ENCODE measurements at regions of chr2 and their contacts with region 1.

Region 1: GRCh38 chr2:135709992-135710391 is 31.7 kb upstream of the UBXN4 start:
- DNase-seq: peak; percentile 84
- ATAC-seq: peak; percentile 74
- H3K4me3 Mint-ChIP-seq: no peak overlapping the region
- H3K27ac Mint-ChIP-seq: no peak overlapping the region
- H3K4me1 Mint-ChIP-seq: no peaks in the 10 kb centered on the region
- H3K27me3 Mint-ChIP-seq: no peaks in the 10 kb centered on the region

Region 2: DNA sequence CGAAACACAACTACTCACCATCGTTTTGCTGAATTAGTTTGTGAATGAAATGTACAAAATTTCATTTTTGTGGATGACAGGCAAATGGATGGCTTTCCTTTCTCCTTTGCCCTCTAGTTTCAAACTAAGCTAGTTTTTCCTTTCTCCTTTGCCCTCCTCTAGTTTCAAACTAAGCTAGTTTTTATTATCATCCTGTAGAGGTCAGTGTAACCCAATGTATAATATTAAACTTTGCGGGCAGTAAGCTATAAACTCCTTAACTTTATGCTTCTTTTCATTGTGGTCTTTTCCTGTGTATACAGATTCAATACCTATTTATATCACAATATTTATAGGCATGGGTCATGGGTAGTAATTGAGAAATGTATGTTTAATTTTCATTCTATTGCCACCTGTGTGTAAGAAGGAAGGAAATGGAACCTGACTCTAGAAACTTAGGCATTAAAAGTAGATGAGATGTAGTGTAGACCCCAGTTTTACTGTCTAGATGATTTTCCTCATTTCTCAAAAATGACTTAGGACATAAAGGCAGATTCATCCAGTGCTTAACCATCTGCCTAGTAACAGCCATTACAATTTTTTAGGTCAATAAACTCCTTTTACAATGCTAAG is 720.9 kb before region 1 on chr2:
- CTCF ChIA-PET with region 1: interaction called, 28 read pairs
- POLR2A ChIA-PET with region 1: no interaction called
- intact Hi-C with region 1: loop called in 1 of 2 experiments (anchors 1 kb)
- DNase-seq: no peak
- ATAC-seq: no peak
- H3K4me3 Mint-ChIP-seq: no peak overlapping the region
- H3K27ac Mint-ChIP-seq: no peak overlapping the region
- H3K4me1 Mint-ChIP-seq: no peaks in the 10 kb centered on the region
- H3K27me3 Mint-ChIP-seq: peaks cover 2% of the 10 kb centered on the region

Region 3: DNA sequence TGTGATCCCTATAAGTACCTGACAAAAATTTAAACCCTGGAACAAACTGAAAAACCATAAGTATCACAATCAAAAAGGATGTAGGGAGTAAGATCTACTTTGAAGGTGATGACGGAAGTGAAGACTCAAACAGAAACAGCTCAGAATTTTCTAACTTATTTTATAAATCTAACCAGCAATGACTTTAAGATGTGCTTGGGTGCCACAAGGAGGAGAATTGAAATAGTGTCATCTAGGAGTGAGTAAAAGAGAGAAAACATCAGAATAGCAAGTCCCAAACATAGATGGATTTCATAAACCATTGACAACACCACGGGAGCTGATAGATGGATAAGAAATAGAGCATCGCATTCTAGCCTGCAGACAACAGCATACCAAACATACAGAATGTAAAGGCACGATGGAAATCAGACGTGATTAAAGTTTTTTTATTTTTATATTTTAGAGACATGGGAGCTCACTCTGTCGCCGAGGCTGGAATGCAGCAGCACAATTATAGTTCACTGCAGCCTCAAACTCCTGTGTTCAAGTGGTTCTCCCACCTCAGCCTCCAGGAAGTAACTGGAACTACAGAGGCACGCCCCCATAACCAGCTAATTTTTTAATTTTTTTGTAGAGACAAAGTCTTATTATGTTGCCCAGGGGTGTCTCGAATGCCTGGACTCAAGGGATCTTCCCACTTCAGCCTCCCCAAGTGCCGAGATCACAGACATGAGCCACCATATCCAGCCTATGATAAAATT is 699.6 kb before region 1 on chr2:
- CTCF ChIA-PET with region 1: interaction called, 54 read pairs
- POLR2A ChIA-PET with region 1: no interaction called
- intact Hi-C with region 1: no loop called
- DNase-seq: no peak
- ATAC-seq: peak; percentile 68
- H3K4me3 Mint-ChIP-seq: no peak overlapping the region
- H3K27ac Mint-ChIP-seq: no peak overlapping the region
- H3K4me1 Mint-ChIP-seq: peaks cover 9% of the 10 kb centered on the region
- H3K27me3 Mint-ChIP-seq: peaks cover 2% of the 10 kb centered on the region

Region 4: DNA sequence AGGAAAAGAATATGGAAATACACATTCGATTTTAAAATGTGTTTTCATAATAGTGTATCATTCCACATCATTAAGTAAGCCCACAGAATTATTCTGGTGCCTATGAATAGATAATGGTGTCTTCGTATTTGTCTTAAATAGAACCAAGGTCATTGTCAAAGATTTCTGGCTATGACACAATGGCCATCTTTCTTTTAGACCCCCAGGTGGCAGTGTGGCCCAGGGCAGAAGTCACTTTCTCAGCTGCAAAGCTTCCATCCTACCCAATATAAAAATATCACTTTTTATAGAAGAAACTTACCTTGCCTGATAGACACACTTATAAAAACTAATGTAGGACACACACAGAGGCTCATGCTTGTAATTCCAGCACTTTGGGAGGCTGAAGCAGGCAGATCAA is 236.4 kb before region 1 on chr2:
- CTCF ChIA-PET with region 1: interaction called, 34 read pairs
- POLR2A ChIA-PET with region 1: no interaction called
- intact Hi-C with region 1: loop called (anchors 1 kb)
- DNase-seq: peak; percentile 50
- ATAC-seq: peak; percentile 42
- H3K4me3 Mint-ChIP-seq: no peak overlapping the region
- H3K27ac Mint-ChIP-seq: no peak overlapping the region
- H3K4me1 Mint-ChIP-seq: peaks cover 2% of the 10 kb centered on the region
- H3K27me3 Mint-ChIP-seq: no peaks in the 10 kb centered on the region

Region 5: GRCh38 chr2:135657806-135658582 is 52.0 kb before region 1 on chr2:
- CTCF ChIA-PET with region 1: interaction called, 13 read pairs
- POLR2A ChIA-PET with region 1: no interaction called
- intact Hi-C with region 1: no loop called
- DNase-seq: peak; percentile 68
- ATAC-seq: peak; percentile 61
- H3K4me3 Mint-ChIP-seq: peak overlapping the region; percentile 59
- H3K27ac Mint-ChIP-seq: peak overlapping the region; percentile 74
- H3K4me1 Mint-ChIP-seq: peaks cover 24% of the 10 kb centered on the region
- H3K27me3 Mint-ChIP-seq: no peaks in the 10 kb centered on the region

Region 6: DNA sequence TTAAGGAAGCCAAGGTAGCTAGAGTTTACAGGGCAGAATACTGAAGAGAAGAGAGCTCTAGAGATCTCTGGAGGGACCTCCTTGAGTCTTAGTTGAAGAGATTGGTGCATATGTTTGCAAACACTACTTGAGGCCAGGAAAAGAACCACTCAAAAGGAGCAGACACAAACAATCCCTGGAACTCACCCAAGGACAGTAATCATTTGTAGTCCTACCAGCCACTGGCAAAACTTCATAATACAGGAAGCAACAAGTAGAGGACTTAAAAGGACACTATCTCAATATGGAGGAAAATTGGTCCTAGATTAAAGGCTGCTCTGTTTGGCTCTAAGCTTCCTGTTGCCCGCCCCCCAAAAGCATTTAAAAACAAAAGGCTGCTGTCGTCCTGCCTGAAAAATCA is 15.3 kb before region 1 on chr2:
- CTCF ChIA-PET with region 1: interaction called, 10 read pairs
- POLR2A ChIA-PET with region 1: no interaction called
- intact Hi-C with region 1: no loop called
- DNase-seq: no peak
- ATAC-seq: no peak
- H3K4me3 Mint-ChIP-seq: no peak overlapping the region
- H3K27ac Mint-ChIP-seq: no peak overlapping the region
- H3K4me1 Mint-ChIP-seq: peaks cover 12% of the 10 kb centered on the region
- H3K27me3 Mint-ChIP-seq: no peaks in the 10 kb centered on the region

Region 7: GRCh38 chr2:135820003-135820618 is 110.1 kb after region 1 on chr2:
- CTCF ChIA-PET with region 1: no interaction called
- POLR2A ChIA-PET with region 1: no interaction called
- intact Hi-C with region 1: no loop called
- DNase-seq: peak; percentile 94
- ATAC-seq: peak; percentile 93
- H3K4me3 Mint-ChIP-seq: peak overlapping the region; percentile 71
- H3K27ac Mint-ChIP-seq: peak overlapping the region; percentile 87
- H3K4me1 Mint-ChIP-seq: peaks cover 45% of the 10 kb centered on the region
- H3K27me3 Mint-ChIP-seq: no peaks in the 10 kb centered on the region